ENCODE measurements at regions of chr1 and their contacts with region 1.

Region 1: GRCh38 chr1:169133801-169134502 is 27.5 kb downstream of the ATP1B1 start:
- DNase-seq: no peak

Region 2: DNA sequence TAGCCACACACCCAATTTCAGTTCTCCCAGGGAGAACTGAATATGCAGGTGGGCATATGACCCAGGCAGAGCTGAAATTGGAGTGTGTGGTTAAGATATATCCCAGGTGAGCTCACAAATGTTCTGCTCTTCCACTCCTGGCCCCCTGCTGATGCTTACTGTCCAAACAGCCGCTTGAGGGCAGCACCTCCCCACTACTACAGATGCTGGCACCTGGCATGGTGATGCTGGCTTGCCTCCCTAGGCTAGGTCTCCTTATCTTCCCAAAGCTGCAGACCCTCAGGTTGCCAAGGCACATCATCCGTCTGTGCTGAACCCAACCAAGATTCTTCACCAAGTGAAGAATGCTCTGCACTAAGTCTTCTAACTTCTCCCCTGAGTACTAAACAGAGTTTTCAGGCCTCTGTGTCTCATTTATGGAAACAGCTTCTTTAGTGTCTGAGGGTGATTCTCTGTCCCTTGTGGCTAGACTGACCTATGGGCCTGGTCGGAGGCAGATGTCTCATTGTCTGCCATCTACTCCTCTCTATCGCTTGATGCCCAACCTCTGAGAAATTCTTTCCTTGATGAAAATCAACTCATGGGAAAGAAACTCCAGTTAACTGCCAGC is 530.3 kb before region 1 on chr1:
- intact Hi-C with region 1: loop called (anchors 10 kb)
- DNase-seq: peak; percentile 69 to 97 (median 84)

Region 3: GRCh38 chr1:168637350-168637991 is 496.5 kb before region 1 on chr1:
- intact Hi-C with region 1: loop called (anchors 10 kb)
- DNase-seq: no peak

Region 4: GRCh38 chr1:168734946-168735345 is 399.0 kb before region 1 on chr1:
- intact Hi-C with region 1: loop called (anchors 10 kb)
- DNase-seq: peak in 2 of 10 donors; percentile 29 to 33

Region 5: GRCh38 chr1:169175461-169175860 is 41.5 kb after region 1 on chr1:
- intact Hi-C with region 1: no loop called
- DNase-seq: no peak

Region 6: DNA sequence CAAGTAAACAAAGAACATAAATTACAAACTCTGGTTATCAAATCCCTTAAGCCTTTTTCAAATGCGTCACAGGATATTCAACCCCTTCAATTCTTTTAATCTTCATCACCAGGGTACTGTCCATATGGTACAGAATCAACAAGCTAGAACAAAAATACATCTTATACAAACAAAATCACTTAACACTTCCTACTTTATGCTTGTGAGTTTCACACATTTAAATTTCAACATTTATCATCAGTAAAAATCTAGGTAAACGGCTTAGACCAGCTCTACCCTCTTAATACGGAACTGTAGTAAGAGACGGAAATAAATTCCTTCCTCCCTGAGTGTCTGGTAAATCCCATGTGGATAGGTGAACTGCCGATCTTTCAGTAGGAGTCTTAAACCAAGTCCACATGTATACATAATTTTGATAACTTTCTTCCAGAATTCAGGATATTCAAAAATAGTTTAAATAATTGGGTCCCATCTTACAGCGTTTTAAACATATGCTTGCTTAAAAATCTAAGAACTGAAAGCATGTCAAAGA is 292.3 kb after region 1 on chr1:
- intact Hi-C with region 1: no loop called
- DNase-seq: no peak

Measured in posterior cingulate gyrus (tissue), 11 donors.